Activated CD8-positive, alpha-beta memory T cell treated with anti-CD3 and anti-CD28 coated beads, Interleukin-2, amount 10 ng/mL, durations not matched to agents 7 days and 5 days (primary cell): ENCODE measurements at regions of chr5 and their contacts with region 1.

Region 1: DNA sequence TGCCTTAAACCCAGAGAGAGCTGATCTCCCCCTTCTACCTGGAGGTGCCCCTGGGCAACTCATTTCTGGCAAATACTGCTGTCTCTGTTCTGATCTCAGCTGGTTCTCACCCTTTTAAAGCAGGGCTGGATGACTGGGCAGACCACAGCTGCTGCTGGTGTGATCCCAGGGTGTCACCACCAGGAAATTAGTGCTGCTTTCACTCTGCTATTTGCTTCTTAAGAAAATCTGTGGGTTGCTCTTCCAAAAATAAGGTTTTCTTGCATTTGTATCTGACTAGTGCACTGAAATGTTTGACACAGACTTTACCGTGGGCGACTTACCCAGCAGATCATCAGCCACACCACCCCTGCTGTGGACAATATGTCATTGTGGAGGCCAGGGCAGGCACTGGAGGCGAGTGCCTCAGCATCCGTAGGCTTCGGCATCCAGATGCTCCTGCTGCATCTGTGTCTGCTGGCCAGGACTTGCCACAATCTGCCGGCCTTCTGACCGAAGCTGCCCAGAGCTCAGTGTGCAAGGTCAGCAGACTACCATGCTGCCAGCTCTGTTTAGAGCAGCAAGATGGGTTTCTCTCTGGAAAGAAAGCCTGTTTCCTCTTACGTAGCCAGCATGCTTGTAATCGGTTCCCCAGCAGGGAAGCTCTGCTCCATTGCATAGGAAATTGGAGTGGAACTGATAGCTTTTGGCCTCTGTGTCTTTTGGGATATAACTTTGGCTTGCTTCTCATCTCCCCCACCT is 13.6 kb downstream of the ARHGAP26 start:
- DNase-seq: peak; percentile 92
- ATAC-seq: peak; percentile 87
- H3K4me3 Mint-ChIP-seq: peak overlapping the region; percentile 70
- H3K27ac Mint-ChIP-seq: peak overlapping the region; percentile 86
- H3K4me1 Mint-ChIP-seq: peaks cover 75% of the 10 kb centered on the region
- H3K27me3 Mint-ChIP-seq: no peaks in the 10 kb centered on the region

Region 2: DNA sequence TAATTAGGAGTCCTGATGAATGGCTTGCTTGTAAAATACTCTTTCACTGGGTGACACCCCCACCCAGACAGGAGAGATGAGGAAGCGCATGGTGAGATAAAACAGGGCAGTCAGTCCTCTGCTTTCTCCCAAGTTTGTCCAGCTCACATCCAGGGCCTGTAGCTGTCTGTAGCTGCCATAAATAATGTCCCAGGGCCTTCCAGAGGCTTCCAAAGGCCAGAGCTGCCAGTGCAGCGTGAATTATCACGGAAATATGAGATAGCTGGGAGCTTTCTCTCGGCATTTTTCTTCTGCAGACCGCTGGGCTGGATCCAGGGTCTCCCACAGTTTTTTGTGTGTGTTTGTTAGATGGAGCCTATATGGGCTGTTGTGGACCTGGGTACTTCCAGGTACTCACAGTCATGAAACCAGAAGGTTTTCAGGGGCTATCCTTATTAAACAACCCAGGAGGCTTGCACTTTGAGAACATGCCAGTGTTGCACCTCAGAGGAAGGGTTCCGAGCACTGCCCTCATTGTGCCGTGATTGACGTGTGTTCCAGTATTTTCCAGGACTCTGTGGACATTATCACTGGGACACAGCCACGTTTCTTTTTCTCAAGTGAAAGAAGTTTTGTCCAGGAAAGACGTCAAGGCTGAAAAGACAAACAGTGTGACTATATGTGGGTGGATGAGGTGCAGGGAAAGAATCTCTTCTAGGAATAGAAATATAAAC is 215.3 kb before region 1 on chr5:
- CTCF ChIA-PET with region 1: no interaction called
- DNase-seq: no peak
- ATAC-seq: no peak
- H3K4me3 Mint-ChIP-seq: no peak overlapping the region
- H3K27ac Mint-ChIP-seq: no peak overlapping the region
- H3K4me1 Mint-ChIP-seq: no peaks in the 10 kb centered on the region
- H3K27me3 Mint-ChIP-seq: peaks cover 5% of the 10 kb centered on the region

Region 3: GRCh38 chr5:142800776-142801494 is 17.2 kb after region 1 on chr5:
- CTCF ChIA-PET with region 1: interaction called, 46 read pairs
- DNase-seq: peak; percentile 81
- ATAC-seq: peak; percentile 85
- H3K4me3 Mint-ChIP-seq: peak overlapping the region; percentile 70
- H3K27ac Mint-ChIP-seq: peak overlapping the region; percentile 95
- H3K4me1 Mint-ChIP-seq: peaks cover 68% of the 10 kb centered on the region
- H3K27me3 Mint-ChIP-seq: no peaks in the 10 kb centered on the region

Region 4: DNA sequence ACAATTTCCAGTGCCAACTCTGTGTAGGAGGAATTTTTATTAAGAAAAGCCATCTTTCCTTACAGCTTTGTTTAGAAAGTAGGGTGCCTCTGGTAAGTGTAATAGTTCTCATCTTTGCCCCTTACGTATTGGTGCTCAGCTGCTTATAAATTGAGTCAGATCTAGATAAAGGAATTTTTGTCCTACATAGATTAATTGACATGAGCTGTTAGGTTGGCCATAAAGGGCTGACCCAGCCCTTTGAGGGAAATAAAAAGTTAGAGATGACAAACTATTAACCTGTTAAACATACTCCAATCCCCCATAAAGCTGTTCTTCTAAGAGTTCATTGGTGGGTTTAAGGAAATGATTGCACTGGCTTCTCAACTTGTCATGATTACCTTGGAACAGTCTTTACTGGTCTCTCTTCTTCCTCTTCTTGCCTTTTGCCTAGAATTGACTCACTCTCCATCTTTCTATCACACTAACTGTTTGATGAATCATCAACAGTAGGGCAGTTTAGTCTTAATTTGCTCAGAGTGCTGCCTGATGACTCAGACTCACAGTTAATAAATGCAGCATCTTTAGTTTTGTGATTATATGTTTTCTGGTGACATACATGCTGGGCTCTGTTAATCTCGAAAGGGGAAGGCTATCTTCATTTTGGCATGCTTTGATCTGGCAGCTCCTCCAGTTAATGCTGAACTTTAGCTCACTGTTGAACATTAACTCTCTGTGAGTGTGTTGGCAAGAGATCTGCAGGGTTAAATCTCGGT is 38.1 kb after region 1 on chr5:
- CTCF ChIA-PET with region 1: interaction called, 10 read pairs
- DNase-seq: no peak
- ATAC-seq: peak; percentile 87
- H3K4me3 Mint-ChIP-seq: no peak overlapping the region
- H3K27ac Mint-ChIP-seq: peak overlapping the region; percentile 31
- H3K4me1 Mint-ChIP-seq: peaks cover 85% of the 10 kb centered on the region
- H3K27me3 Mint-ChIP-seq: no peaks in the 10 kb centered on the region